Right ventricle myocardium inferior (tissue), 1 donor: ENCODE measurements at regions of chr3 and their contacts with region 1.

Region 1: GRCh38 chr3:38533285-38533976 is 37.3 kb downstream of the EXOG start:
- DNase-seq: peak; percentile 88
- ATAC-seq: peak; percentile 94

Region 2: GRCh38 chr3:38404286-38404685 is 129.1 kb before region 1 on chr3:
- intact Hi-C with region 1: no loop called
- DNase-seq: peak; percentile 72
- ATAC-seq: peak; percentile 97

Region 3: DNA sequence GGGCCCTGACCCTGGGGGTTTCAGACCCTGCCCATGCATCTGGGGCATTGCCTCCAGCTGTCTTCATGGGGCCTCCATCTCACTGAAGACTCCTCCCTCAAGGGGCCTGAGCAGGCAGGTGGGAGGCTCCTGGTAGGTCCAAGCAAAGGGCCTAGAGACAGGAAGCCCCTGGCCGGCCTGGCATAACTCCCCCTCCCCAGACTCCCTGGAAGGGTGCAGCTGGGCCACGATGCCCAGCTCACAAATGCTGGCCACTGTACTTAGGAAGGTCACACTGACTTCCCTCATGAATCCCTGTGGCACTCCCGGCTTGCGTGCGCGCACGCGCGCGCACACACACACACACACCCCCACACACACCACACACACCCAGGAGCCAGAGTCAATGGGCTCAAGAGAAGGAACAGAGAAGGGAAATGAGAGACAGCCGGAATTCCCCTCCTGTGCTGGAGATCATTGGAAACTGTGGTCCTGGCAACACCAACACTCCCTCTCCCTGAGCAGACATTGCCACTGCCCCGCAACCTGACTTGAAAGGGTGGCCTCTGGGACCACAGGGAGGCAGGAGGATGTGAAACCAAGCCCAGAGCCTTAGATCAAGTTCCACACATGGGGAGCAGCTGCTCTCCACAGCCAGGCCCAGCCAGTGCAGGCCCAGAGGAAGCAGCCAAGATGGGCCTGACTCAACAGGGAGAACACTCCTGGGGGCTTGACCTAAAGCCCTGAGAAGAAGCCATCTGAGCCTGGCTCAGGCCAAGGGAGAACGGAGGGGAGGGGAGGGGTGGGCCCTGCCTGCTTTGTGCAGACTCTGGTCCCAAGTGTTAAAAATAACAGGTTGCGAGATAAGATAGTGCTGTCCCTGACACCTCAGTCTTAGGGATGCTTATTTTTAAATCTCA is 46.4 kb after region 1 on chr3:
- intact Hi-C with region 1: loop called (anchors 1 kb)
- DNase-seq: peak; percentile 53
- ATAC-seq: peak; percentile 82

Region 4: GRCh38 chr3:38616111-38616510 is 82.7 kb after region 1 on chr3:
- intact Hi-C with region 1: loop called (anchors 1 kb)
- DNase-seq: no peak
- ATAC-seq: peak; percentile 93

Region 5: DNA sequence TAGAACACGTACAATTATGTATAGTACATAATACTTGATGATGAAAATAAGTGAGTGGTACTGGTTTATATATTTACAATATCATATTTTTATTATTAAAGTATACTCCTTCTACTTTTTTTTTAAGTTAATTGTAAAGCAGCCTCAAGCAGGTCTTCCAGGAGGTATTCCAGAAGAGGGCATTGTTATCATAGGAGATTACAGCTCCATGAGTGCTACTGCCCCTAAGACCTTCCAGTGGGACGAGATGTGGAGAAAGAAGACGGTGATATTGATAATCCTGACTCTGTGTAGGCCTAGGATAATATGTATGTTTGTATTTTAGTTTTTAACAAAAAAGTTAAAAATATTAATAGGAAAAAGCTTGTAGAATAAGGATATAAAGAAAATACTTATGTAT is 156.3 kb after region 1 on chr3:
- intact Hi-C with region 1: no loop called
- DNase-seq: no peak
- ATAC-seq: no peak

Region 6: GRCh38 chr3:38725726-38726419 is 192.4 kb after region 1 on chr3:
- intact Hi-C with region 1: loop called (anchors 10 kb)
- DNase-seq: no peak
- ATAC-seq: peak; percentile 88